Sigmoid colon (tissue), 7 donors: ENCODE measurements at regions of chrX and their contacts with region 1.

Region 1: GRCh38 chrX:17374619-17375366 is at the start of gene NHS:
- DNase-seq: peak; percentile 89
- H3K4me3 ChIP-seq: peak within 1 kb of the TSS; percentile 52 to 69 (median 68)
- H3K27ac ChIP-seq: peak within 1 kb of the TSS; percentile 77 to 84 (median 81)
- H3K4me1 ChIP-seq: peaks cover 0 to 10% (median 0%) of the 10 kb centered on the region in 4 donors
- H3K27me3 ChIP-seq: peaks cover 0 to 5% (median 0%) of the 10 kb centered on the region in 3 donors
- CTCF ChIP-seq: peak in 2 of 4 experiments; percentile 17 to 62
- EP300 ChIP-seq: no peak
- POLR2A ChIP-seq: peak in 1 of 2 donors; percentile 29
- total RNA-seq, gene NHS: 9.3 to 22.7 (median 10.2) TPM

Region 2: DNA sequence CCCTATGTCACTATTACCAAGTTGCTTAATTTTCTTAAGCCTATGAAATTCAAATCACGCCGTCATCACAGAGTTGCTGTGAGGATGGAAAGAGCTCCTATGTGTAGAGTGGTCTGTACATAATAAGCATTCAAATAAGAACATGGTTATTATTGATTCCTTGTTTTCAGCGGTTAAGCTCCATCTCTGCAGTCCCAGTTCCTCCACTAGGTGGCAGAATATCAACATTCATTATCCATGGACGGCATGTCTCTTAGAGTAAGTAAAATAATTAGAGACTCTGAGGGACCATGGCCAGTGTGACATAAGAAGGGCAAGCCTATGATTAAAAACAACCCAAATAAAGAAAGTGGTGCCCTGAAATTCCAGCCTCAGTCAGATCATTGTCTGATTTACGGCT is 132.3 kb before region 1 on chrX:
- intact Hi-C with region 1: loop called (anchors 1 kb)
- DNase-seq: no peak
- H3K4me3 ChIP-seq: no peak overlapping the region
- H3K27ac ChIP-seq: no peak overlapping the region
- H3K4me1 ChIP-seq: no peaks in the 10 kb centered on the region
- H3K27me3 ChIP-seq: no peaks in the 10 kb centered on the region
- CTCF ChIP-seq: peak; percentile 51 to 69 (median 62)
- EP300 ChIP-seq: no peak
- POLR2A ChIP-seq: no peak

Region 3: GRCh38 chrX:17459008-17459611 is 84.3 kb after region 1 on chrX:
- intact Hi-C with region 1: loop called (anchors 10 kb)
- DNase-seq: peak; percentile 77
- H3K4me3 ChIP-seq: no peak overlapping the region
- H3K27ac ChIP-seq: peak overlapping the region in 1 of 4 donors; percentile 37
- H3K4me1 ChIP-seq: peaks cover 0 to 10% (median 0%) of the 10 kb centered on the region in 4 donors
- H3K27me3 ChIP-seq: no peaks in the 10 kb centered on the region
- CTCF ChIP-seq: no peak
- EP300 ChIP-seq: no peak
- POLR2A ChIP-seq: no peak

Region 4: DNA sequence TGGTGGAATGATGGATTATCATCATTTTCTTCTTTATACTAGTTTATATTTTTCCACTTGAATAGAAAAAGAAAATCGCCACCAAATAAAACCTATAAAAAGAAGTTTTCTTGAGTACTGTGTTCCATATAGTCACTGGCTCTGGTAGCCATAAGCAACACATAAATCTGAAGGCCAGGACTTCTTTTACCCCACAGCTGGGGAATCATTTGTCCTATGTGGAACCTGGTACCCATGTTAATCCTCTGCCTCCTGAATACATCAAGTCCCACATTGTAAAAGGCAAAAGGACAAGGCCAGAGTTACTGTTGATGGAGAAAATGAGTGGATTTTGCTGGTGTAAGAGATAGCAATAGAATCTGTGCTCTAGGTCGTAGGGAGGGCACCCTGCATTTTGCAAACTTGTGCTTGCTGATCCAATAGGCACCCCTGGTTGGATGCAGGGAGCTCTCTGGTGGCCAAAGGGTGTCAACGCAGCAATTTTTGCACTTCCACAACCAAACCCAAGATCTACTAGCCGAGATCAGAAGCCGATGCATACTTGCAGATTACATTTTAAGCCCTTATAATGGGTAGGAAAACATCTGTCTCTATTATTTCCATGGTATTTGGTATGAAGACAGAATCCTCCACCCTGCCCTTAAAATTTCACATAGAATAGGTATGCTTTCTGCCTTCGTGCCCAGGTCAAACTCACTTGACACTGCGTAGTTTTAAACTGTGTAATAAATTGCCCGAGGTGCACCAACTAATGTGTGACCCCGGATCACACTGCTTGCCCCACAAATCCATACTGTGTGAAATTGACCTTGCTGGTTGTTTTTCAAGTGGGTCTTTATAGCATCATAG is 216.3 kb after region 1 on chrX:
- intact Hi-C with region 1: loop called (anchors 2 kb)
- DNase-seq: peak; percentile 83
- H3K4me3 ChIP-seq: peak overlapping the region in 2 of 4 donors; percentile 8 to 18
- H3K27ac ChIP-seq: peak overlapping the region in 3 of 4 donors; percentile 61 to 76 (median 65)
- H3K4me1 ChIP-seq: peaks cover 0 to 23% (median 2%) of the 10 kb centered on the region in 4 donors
- H3K27me3 ChIP-seq: no peaks in the 10 kb centered on the region
- CTCF ChIP-seq: peak; percentile 37 to 59 (median 52)
- EP300 ChIP-seq: no peak
- POLR2A ChIP-seq: no peak

Region 5: GRCh38 chrX:17689971-17690409 is 315.2 kb after region 1 on chrX:
- intact Hi-C with region 1: loop called (anchors 2 kb)
- DNase-seq: no peak
- H3K4me3 ChIP-seq: no peak overlapping the region
- H3K27ac ChIP-seq: peak overlapping the region in 2 of 4 donors; percentile 31 to 32
- H3K4me1 ChIP-seq: no peaks in the 10 kb centered on the region
- H3K27me3 ChIP-seq: no peaks in the 10 kb centered on the region
- CTCF ChIP-seq: peak; percentile 29 to 62 (median 51)
- EP300 ChIP-seq: no peak
- POLR2A ChIP-seq: no peak